HCT116 (cell line): ENCODE measurements at regions of chr18 and their contacts with region 1.

Region 1: DNA sequence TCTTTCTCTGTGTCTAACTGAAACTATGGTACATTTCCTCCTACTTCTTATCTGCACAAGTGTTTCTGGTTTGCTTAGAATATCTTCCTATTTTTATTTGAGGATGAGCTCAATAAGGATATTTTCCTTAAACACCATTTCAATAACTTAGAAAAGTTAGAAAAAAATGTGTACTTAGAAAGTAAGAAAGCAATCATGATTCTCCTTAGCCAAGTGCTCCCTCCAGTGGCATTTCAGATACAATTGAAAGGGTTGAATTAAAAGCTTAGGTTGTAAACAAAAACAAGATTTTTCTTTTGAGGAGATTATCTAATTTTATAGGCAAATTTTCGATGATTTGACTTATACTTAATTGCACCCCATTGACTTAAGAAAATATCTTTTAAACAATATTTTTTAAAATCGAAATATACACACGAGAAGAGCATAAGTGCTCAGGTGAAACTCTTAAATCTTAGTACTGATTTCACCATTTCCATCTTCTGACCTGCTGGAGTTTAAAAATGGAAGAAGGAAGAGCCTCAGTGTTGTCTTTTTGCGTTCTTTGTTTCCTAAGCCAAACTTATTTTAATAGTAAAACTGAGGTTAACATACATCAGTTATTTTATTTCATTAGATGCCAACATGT is 26.9 kb downstream of the C18orf63 start:
- DNase-seq: peak; percentile 51
- ATAC-seq: peak; percentile 69
- H3K4me3 ChIP-seq: no peak overlapping the region
- H3K27ac ChIP-seq: no peak overlapping the region
- H3K4me1 ChIP-seq: no peaks in the 10 kb centered on the region
- H3K27me3 ChIP-seq: peaks cover 16% of the 10 kb centered on the region
- CTCF ChIP-seq: peak; percentile 34 to 68 (median 66)
- POLR2A ChIP-seq: no peak
- RAD21 ChIP-seq: peak; percentile 77

Region 2: GRCh38 chr18:72762515-72763122 is 1579.9 kb before region 1 on chr18:
- CTCF ChIA-PET with region 1: interaction called, 4 read pairs
- POLR2A ChIA-PET with region 1: no interaction called
- RAD21 ChIA-PET with region 1: no interaction called
- intact Hi-C with region 1: loop called (anchors 5 kb)
- DNase-seq: peak; percentile 6
- ATAC-seq: no peak
- H3K4me3 ChIP-seq: no peak overlapping the region
- H3K27ac ChIP-seq: no peak overlapping the region
- H3K4me1 ChIP-seq: no peaks in the 10 kb centered on the region
- H3K27me3 ChIP-seq: no peaks in the 10 kb centered on the region
- CTCF ChIP-seq: peak; percentile 30 to 73 (median 41); a peak in 5 of 6 replicates
- POLR2A ChIP-seq: no peak
- RAD21 ChIP-seq: peak; percentile 50; the same call in 1 of the 2 replicates

Region 3: GRCh38 chr18:74040459-74041332 is 301.8 kb before region 1 on chr18:
- CTCF ChIA-PET with region 1: interaction called, 3 read pairs
- POLR2A ChIA-PET with region 1: no interaction called
- RAD21 ChIA-PET with region 1: no interaction called
- intact Hi-C with region 1: loop called (anchors 1 kb)
- DNase-seq: peak; percentile 4
- ATAC-seq: peak; percentile 97
- H3K4me3 ChIP-seq: no peak overlapping the region
- H3K27ac ChIP-seq: no peak overlapping the region
- H3K4me1 ChIP-seq: no peaks in the 10 kb centered on the region
- H3K27me3 ChIP-seq: no peaks in the 10 kb centered on the region
- CTCF ChIP-seq: peak; percentile 14 to 82 (median 78); a peak in 4 of 6 replicates
- POLR2A ChIP-seq: no peak
- RAD21 ChIP-seq: peak; percentile 46

Region 4: GRCh38 chr18:74081966-74082741 is 260.4 kb before region 1 on chr18:
- CTCF ChIA-PET with region 1: interaction called, 18 read pairs
- POLR2A ChIA-PET with region 1: no interaction called
- RAD21 ChIA-PET with region 1: no interaction called
- intact Hi-C with region 1: loop called (anchors 1 kb)
- DNase-seq: peak; percentile 24
- ATAC-seq: peak; percentile 100
- H3K4me3 ChIP-seq: no peak overlapping the region
- H3K27ac ChIP-seq: no peak overlapping the region
- H3K4me1 ChIP-seq: 0 out of 4 replicates have a peak, but pooled peaks cover 0 to 3% of the 10 kb centered on the region in 2 experiments
- H3K27me3 ChIP-seq: peaks cover 14% of the 10 kb centered on the region
- CTCF ChIP-seq: peak; percentile 55 to 81 (median 56); a peak in 5 of 6 replicates
- POLR2A ChIP-seq: no peak
- RAD21 ChIP-seq: peak; percentile 48; the same call in 1 of the 2 replicates

Region 5: GRCh38 chr18:74196220-74197119 is 146.1 kb before region 1 on chr18:
- CTCF ChIA-PET with region 1: interaction called, 21 read pairs
- POLR2A ChIA-PET with region 1: no interaction called
- RAD21 ChIA-PET with region 1: interaction called in 1 of 2 experiments, 4 read pairs
- intact Hi-C with region 1: loop called (anchors 1 kb)
- DNase-seq: peak; percentile 42
- ATAC-seq: peak; percentile 89
- H3K4me3 ChIP-seq: peak overlapping the region; percentile 27 to 51
- H3K27ac ChIP-seq: no peak overlapping the region
- H3K4me1 ChIP-seq: peaks cover 0 to 4% of the 10 kb centered on the region in 2 experiments; a peak in 1 of 4 replicates
- H3K27me3 ChIP-seq: peaks cover 4% of the 10 kb centered on the region; the same call in 1 of the 2 replicates
- CTCF ChIP-seq: peak; percentile 77 to 96 (median 90)
- POLR2A ChIP-seq: no peak
- RAD21 ChIP-seq: peak; percentile 80

Region 6: GRCh38 chr18:74551936-74552555 is 209.5 kb after region 1 on chr18:
- CTCF ChIA-PET with region 1: interaction called, 15 read pairs
- POLR2A ChIA-PET with region 1: no interaction called
- RAD21 ChIA-PET with region 1: interaction called in 1 of 2 experiments, 5 read pairs
- intact Hi-C with region 1: no loop called
- DNase-seq: peak; percentile 72
- ATAC-seq: peak; percentile 100
- H3K4me3 ChIP-seq: no peak overlapping the region
- H3K27ac ChIP-seq: no peak overlapping the region
- H3K4me1 ChIP-seq: no peaks in the 10 kb centered on the region
- H3K27me3 ChIP-seq: peaks cover 18% of the 10 kb centered on the region
- CTCF ChIP-seq: peak; percentile 67 to 80 (median 77)
- POLR2A ChIP-seq: no peak
- RAD21 ChIP-seq: peak; percentile 77